ENCODE measurements at regions of chr7 and their contacts with region 1.

Region 1: DNA sequence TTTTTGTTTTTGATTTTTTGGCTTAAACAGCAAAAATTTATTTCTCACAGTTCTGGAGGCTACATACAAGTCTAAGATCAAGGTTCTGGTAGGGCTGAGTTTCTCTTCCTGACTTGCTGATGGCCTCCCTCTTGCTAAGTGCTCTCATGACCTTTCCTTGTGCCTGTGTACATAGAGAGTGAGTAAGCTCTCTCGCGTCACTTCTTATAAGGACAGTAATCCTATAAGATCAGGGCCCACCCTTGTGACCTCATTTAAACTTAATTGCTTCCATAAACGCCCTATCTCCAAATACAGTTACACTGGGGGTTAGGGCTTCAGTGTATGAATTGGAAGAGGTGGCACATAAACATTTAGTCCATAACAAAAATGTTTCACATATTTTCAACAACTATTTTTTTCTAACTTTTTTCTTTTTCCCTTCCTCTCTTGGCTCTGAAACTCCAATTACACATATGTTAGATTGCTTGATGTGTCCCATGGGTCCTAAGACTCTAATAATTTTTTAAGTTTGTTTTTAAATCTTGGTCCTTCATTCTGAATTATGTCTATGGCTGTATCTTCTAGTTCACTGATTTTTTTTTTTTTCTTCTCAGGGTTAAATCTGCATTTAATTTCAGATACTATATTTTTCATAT is 149.8 kb downstream of the HBP1 start:
- DNase-seq: no peak

Region 2: GRCh38 chr7:107089627-107090026 is 229.0 kb before region 1 on chr7:
- intact Hi-C with region 1: loop called in 1 of 2 experiments (anchors 5 kb)
- DNase-seq: no peak

Region 3: DNA sequence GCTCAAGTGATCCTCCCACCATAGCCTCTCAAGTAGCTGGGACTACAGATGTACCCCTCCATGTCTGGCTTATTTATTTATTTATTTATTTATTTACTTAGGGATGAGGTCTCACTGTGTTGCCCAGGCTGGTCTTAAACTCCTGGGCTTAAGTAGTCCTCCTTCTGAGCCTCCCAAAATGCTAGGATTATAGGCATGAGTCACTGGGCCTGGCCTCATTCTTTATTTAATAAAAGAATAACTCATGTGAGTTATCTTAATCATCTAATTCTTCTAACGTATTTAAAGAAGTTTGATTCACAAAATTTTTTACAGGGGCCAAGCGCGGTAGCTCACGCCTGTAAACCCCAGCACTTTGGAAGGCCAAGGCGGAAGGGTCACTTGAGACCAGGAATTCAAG is 334.0 kb after region 1 on chr7:
- intact Hi-C with region 1: loop called in 1 of 2 experiments (anchors 2 kb)
- DNase-seq: no peak

Measured in posterior vena cava (tissue), 2 donors.